ENCODE measurements at regions of chr12 and their contacts with region 1.

Region 1: DNA sequence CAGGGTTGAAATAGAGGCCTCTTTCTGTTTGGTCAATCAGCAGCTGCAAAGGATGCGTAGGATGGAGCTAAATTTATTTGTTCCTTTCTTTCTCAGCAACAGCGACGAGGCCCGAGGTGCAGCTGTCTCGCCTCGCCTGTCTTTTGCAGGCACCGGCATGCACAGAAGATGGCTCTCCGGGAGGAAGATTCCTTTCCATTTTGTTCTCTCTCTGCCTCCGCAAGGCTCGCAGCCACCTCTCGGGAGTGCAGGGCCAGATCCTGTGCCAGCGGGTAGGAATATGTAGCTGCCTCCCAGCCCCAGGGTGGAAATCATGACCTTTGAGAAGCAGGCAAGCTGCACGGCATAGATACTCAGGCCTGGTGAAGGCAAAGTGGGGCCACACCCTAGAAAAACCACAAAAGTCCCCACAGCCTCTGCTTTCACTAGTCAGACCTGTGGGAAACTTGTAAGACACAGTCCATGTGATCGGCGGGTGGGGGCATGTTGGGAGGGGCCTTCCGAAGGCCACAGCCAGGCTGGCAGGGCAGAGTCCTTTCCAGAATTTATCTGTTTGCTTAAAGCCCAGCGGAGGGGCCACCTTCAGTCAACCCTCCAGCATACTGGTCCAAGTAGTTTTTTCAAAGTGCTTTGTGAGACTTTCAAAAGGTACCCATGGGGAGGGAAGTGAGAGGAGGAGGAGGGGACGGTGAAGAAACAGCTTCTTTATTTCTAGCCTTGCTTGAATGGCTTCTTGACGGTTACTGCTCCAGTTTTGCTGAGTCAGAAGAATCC is at the start of gene MAP1LC3B2:
- DNase-seq: peak; percentile 94
- ATAC-seq: peak; percentile 93
- H3K4me3 Mint-ChIP-seq: peak within 1 kb of the TSS; percentile 78
- H3K27ac Mint-ChIP-seq: peak within 1 kb of the TSS; percentile 100
- H3K4me1 Mint-ChIP-seq: peaks cover 41% of the 10 kb centered on the region
- H3K27me3 Mint-ChIP-seq: peaks cover 3% of the 10 kb centered on the region
- total RNA-seq, gene MAP1LC3B2: 1.3 to 1.7 TPM

Region 2: DNA sequence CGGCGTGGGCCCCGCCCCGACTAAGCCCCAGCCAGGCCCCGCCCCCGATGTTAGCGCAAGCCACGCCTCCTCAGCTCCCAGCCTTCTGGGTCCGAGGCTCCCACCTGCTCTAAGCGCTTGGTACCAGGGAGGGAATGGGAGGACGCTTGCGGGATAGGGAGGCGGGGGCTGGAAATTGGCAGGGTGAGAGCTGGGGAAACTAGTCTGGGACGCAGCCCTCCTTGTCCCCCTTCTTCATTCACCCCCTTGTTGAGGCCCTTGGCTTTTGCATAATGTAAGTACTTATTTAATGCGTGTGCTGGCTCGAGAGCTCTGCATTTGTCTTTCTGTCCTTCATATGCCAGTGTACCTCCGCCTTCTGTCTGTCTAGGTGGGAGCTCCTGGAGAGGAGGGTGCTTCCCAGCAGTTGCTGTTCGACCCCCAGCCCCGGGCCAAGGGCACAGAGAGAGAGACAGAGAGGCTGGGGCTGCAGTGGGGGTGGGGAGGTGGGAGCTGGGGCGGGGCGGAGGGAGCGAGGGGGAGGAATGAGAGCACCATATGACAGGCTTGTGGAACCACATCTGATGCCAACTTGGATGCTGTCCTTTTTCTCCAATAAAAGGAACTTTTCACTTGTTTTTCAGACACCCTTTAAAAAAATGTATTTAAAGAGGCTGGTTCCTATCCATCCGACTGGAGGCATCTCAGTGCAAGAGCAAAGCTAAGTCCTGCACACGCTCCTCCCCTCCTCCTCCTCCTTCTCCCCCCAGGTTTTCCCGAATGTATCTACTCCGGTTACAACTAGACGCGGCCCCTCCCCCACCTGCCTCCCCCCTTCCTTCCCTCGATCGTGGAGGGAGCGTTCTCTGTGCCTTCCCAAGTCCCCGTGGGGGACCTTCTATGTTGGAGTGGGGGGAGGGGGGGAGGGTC is 25.8 kb before region 1 on chr12:
- CTCF ChIA-PET with region 1: interaction called, 5 read pairs
- POLR2A ChIA-PET with region 1: interaction called, 16 read pairs
- DNase-seq: peak; percentile 82
- ATAC-seq: peak; percentile 94
- H3K4me3 Mint-ChIP-seq: peak overlapping the region; percentile 83
- H3K27ac Mint-ChIP-seq: peak overlapping the region; percentile 72
- H3K4me1 Mint-ChIP-seq: peaks cover 38% of the 10 kb centered on the region
- H3K27me3 Mint-ChIP-seq: peaks cover 4% of the 10 kb centered on the region

Region 3: GRCh38 chr12:116539905-116540482 is 19.4 kb before region 1 on chr12:
- CTCF ChIA-PET with region 1: interaction called, 4 read pairs
- POLR2A ChIA-PET with region 1: interaction called, 11 read pairs
- DNase-seq: no peak
- ATAC-seq: no peak
- H3K4me3 Mint-ChIP-seq: no peak overlapping the region
- H3K27ac Mint-ChIP-seq: no peak overlapping the region
- H3K4me1 Mint-ChIP-seq: peaks cover 22% of the 10 kb centered on the region
- H3K27me3 Mint-ChIP-seq: no peaks in the 10 kb centered on the region

Region 4: GRCh38 chr12:116599285-116600136 is 40.2 kb after region 1 on chr12:
- CTCF ChIA-PET with region 1: interaction called, 13 read pairs
- POLR2A ChIA-PET with region 1: interaction called, 23 read pairs
- DNase-seq: peak; percentile 68
- ATAC-seq: no peak
- H3K4me3 Mint-ChIP-seq: no peak overlapping the region
- H3K27ac Mint-ChIP-seq: no peak overlapping the region
- H3K4me1 Mint-ChIP-seq: peaks cover 44% of the 10 kb centered on the region
- H3K27me3 Mint-ChIP-seq: peaks cover 2% of the 10 kb centered on the region